Activated CD8-positive, alpha-beta T cell treated with anti-CD3 and anti-CD28 coated beads, Interleukin-2, amount 10 ng/mL, durations not matched to agents 7 days and 5 days (primary cell): ENCODE measurements at regions of chr19 and their contacts with region 1.

Region 1: DNA sequence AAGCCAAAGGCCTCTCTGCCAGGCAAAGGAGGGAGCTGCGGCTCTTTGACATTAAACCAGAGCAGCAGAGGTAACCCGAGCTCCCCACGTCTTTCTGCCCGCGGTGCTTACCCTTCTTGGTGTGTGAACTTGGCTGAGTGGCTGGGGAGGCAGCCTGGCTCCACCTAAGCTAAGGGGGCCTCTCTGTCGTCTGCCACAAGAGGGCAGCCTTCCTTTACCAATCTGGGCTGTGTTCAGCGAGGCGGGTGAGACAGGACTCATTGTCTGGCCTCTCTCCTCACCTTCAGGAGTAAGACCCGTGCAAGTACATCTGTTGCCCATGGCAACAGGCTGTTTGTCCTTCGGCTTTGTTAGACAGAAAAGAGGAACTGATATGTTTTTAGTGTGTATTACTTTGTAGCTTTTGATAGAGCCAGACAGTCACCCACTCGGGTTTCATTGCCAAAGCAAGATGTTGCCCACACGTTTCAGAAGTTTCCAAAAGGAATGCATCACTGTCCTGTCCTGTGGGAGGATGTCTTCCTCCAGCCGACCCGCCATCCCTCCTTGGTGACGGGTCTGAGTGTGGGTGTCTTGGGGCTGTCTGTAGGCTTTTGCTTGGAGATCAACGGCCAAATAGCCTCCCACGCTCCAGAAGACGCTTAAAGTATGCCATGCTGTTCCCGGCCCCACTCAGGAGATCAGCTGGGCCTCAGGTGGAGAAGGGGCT is 4.6 kb downstream of the POP4 start:
- DNase-seq: peak; percentile 92
- ATAC-seq: peak; percentile 78
- H3K4me3 Mint-ChIP-seq: no peak overlapping the region
- H3K27ac Mint-ChIP-seq: peak overlapping the region; percentile 31
- H3K4me1 Mint-ChIP-seq: peaks cover 28% of the 10 kb centered on the region
- H3K27me3 Mint-ChIP-seq: no peaks in the 10 kb centered on the region

Region 2: GRCh38 chr19:29587518-29587986 is 23.2 kb before region 1 on chr19:
- CTCF ChIA-PET with region 1: interaction called, 7 read pairs
- POLR2A ChIA-PET with region 1: interaction called, 26 read pairs
- DNase-seq: peak; percentile 83
- ATAC-seq: peak; percentile 99
- H3K4me3 Mint-ChIP-seq: no peak overlapping the region
- H3K27ac Mint-ChIP-seq: peak overlapping the region; percentile 47
- H3K4me1 Mint-ChIP-seq: peaks cover 19% of the 10 kb centered on the region
- H3K27me3 Mint-ChIP-seq: peaks cover 31% of the 10 kb centered on the region

Region 3: GRCh38 chr19:29622138-29623070 is 11.7 kb after region 1 on chr19:
- CTCF ChIA-PET with region 1: interaction called, 96 read pairs
- POLR2A ChIA-PET with region 1: interaction called, 96 read pairs
- DNase-seq: peak; percentile 60
- ATAC-seq: peak; percentile 71
- H3K4me3 Mint-ChIP-seq: peak overlapping the region; percentile 81
- H3K27ac Mint-ChIP-seq: peak overlapping the region; percentile 95
- H3K4me1 Mint-ChIP-seq: peaks cover 67% of the 10 kb centered on the region
- H3K27me3 Mint-ChIP-seq: peaks cover 3% of the 10 kb centered on the region

Region 4: DNA sequence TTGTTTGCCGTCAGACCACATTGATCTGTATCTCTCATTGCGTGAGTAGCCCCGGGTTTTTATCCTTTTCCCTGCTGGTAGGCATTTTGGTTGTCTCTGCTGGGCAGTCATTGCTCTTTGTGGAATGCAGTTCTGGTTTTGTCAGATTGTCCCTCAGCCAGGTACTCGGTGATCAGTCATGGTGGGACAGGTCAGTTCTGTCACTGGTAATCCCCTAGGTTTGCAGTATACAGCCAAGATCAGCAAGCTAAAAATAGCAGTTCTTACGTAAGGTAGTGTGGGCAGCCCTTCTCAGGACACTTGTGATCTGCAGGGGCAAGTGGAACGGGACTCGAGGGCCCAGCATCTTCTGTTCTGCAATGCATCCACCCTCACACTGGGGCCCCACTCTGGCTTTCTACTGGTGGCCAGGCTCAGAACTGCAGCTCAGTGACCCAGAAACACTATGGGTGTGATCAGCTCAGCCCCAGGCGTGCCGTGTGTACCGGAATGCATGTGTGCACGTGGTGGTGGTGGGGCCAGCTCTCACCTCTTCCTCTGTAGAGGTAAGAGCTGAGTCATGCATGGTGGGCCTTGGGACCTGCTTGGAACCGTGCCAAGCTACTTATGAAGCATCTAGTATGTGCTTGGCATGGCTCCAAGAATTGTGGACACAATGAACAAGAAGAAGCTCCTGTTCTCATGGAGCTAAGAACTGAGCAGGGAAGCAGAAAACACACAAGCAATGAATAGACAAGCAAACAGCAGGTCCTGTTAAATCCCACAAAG is 60.9 kb after region 1 on chr19:
- CTCF ChIA-PET with region 1: interaction called, 179 read pairs
- POLR2A ChIA-PET with region 1: interaction called, 68 read pairs
- DNase-seq: peak; percentile 92
- ATAC-seq: peak; percentile 63
- H3K4me3 Mint-ChIP-seq: peak overlapping the region; percentile 58
- H3K27ac Mint-ChIP-seq: peak overlapping the region; percentile 87
- H3K4me1 Mint-ChIP-seq: peaks cover 91% of the 10 kb centered on the region
- H3K27me3 Mint-ChIP-seq: no peaks in the 10 kb centered on the region

Region 5: DNA sequence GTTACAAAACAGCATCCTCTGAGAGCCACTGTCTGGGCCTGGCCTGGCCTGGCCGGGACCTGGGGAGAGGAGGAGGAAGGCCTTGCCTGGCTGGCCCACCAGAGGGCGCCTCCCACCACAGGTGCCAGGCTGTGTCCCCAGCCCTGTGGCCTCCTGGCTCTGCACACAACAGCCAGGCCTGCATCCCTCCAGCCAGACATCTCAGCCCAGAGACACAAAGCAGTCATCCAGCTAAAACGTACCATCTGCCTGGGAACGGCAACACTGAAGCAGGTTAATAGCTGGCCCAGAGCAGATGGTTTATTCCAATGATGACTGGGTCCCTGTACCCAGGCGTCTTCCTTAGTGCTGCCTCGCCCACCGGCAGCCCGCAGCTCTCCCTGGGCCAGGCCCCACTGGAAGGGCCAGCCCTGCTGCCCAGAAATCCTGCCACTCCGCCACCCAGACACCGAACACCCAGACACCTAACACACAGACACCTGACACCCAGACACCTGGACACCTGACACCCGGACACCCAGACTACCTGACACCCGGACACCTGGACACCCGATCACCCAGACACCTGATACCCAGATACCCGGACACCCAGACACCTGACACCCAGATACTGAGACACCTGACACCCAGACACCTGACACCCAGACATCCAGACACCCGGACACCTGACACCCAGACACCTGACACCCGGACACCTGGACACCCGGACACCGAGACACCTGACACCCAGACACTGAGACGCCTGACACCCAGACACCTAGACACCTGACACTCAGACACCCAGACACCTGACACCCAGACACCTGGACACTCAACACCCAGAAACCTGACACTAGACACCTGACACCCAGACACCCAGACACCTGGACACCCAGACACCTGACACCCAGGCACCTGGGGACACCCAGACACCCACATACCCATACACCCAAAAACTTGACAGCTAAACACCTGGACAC is 84.2 kb after region 1 on chr19:
- CTCF ChIA-PET with region 1: interaction called, 83 read pairs
- POLR2A ChIA-PET with region 1: interaction called, 7 read pairs
- DNase-seq: peak; percentile 88
- ATAC-seq: peak; percentile 98
- H3K4me3 Mint-ChIP-seq: no peak overlapping the region
- H3K27ac Mint-ChIP-seq: peak overlapping the region; percentile 77
- H3K4me1 Mint-ChIP-seq: peaks cover 20% of the 10 kb centered on the region
- H3K27me3 Mint-ChIP-seq: no peaks in the 10 kb centered on the region

Region 6: GRCh38 chr19:29714953-29715700 is 104.4 kb after region 1 on chr19 and contains the start of gene C19orf12:
- CTCF ChIA-PET with region 1: interaction called, 204 read pairs
- POLR2A ChIA-PET with region 1: interaction called, 85 read pairs
- DNase-seq: peak; percentile 75
- ATAC-seq: peak; percentile 69
- H3K4me3 Mint-ChIP-seq: peak within 1 kb of the TSS; percentile 95
- H3K27ac Mint-ChIP-seq: peak within 1 kb of the TSS; percentile 96
- H3K4me1 Mint-ChIP-seq: peaks cover 57% of the 10 kb centered on the region
- H3K27me3 Mint-ChIP-seq: no peaks in the 10 kb centered on the region
- total RNA-seq, gene C19orf12: 38.7 to 41.0 TPM